ENCODE measurements at regions of chr12 and their contacts with region 1.

Region 1: DNA sequence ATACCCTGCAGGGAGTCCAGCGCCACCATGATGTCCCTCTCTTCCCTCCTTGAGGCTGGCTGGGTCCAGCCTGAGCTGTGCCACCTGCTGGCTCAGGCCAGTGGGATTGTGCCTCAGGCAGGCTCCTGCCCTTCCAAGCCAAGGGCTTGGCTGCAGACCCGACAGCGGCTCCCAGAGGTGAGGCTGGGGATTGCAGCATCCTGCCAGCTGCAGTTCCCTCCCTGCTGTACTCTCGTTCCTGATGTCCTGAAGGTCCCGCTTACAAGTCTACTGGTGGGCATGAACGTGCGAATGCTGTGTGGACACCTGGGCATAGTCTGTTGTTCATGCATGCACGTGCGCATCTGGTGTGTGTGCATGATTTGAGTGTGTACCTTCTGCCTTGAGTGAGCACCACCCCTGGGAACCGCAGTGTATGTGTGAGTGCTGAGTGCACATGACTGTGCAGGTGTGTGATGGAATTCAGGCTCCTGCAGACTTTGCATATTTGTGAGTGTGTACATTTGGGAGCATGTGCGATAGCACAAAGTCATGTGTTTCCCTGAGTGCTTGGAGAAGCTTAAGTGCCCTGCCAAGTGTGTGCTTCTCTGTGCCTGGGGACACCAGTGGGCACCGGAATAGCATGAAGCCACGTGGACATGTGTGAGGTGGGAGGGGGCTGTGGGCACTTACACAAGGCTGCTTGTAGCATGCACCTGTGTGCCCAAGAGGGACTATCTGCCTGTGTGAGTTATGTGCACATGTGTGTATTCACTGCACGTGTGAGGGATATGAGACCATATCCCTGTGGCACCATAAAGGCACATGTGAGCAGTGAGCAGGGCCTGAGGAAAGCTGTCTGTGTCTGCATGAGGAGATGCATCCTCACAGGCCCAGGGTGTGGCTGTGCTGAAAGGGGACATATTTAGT is 19.3 kb upstream of the KRT7 start:
- DNase-seq: peak; percentile 85 to 99
- H3K4me3 ChIP-seq: no peak overlapping the region
- H3K27ac ChIP-seq: no peak overlapping the region
- H3K4me1 ChIP-seq: peaks cover 0 to 4% (median under 1%) of the 10 kb centered on the region in 4 experiments; a peak in 4 of 7 replicates
- H3K27me3 ChIP-seq: no peaks in the 10 kb centered on the region
- CTCF ChIP-seq: peak; percentile 94 to 100 (median 99)
- EP300 ChIP-seq: no peak
- POLR2A ChIP-seq: no peak
- RAD21 ChIP-seq: peak; percentile 91 to 95

Region 2: DNA sequence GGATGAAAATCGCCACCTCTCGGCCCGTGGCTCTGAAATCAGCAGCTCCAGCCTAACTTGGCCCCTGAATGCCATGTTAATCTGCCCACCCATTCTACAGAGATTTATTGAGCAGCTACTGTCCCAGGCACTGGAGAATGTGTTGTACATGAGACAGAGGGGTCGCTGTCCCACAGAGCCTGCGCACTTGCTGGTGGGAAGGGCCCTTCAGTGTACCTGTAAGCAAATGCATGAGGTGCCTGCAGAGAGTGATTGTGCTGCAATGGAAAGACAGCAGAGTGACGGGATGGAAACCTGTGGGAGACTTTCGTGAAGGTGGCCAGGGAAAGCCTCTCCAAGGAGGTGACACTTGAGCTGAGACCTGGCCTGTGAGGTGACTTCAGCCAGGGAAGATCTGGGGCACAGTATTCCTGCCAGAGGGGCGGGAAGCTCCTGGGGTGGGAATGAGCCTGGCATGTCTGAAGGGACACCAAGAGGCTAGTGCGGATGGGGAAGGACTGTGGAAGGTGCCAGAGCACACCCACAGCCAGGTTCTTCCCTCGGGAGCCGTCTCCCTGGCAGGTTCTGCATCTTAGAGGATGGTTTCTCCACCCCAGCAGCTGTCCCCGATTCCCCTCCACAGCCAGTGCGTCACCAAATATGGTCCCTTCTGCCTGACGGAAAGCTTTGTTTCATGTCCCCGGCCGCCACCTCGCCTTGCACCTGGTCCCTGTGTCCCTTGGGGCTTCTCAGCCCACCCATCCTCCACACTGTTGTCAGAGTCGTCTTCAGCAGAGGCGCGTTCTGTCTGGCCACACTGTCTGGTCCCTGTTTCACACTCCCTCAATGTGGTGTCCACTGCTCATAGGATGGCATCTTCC is 125.6 kb before region 1 on chr12:
- CTCF ChIA-PET with region 1: no interaction called
- POLR2A ChIA-PET with region 1: no interaction called
- DNase-seq: no peak
- H3K4me3 ChIP-seq: no peak overlapping the region
- H3K27ac ChIP-seq: no peak overlapping the region
- H3K4me1 ChIP-seq: peaks cover 0 to 1% (median 0%) of the 10 kb centered on the region in 4 experiments; a peak in 2 of 7 replicates
- H3K27me3 ChIP-seq: no peaks in the 10 kb centered on the region
- CTCF ChIP-seq: no peak
- EP300 ChIP-seq: no peak
- POLR2A ChIP-seq: no peak
- RAD21 ChIP-seq: no peak

Region 3: DNA sequence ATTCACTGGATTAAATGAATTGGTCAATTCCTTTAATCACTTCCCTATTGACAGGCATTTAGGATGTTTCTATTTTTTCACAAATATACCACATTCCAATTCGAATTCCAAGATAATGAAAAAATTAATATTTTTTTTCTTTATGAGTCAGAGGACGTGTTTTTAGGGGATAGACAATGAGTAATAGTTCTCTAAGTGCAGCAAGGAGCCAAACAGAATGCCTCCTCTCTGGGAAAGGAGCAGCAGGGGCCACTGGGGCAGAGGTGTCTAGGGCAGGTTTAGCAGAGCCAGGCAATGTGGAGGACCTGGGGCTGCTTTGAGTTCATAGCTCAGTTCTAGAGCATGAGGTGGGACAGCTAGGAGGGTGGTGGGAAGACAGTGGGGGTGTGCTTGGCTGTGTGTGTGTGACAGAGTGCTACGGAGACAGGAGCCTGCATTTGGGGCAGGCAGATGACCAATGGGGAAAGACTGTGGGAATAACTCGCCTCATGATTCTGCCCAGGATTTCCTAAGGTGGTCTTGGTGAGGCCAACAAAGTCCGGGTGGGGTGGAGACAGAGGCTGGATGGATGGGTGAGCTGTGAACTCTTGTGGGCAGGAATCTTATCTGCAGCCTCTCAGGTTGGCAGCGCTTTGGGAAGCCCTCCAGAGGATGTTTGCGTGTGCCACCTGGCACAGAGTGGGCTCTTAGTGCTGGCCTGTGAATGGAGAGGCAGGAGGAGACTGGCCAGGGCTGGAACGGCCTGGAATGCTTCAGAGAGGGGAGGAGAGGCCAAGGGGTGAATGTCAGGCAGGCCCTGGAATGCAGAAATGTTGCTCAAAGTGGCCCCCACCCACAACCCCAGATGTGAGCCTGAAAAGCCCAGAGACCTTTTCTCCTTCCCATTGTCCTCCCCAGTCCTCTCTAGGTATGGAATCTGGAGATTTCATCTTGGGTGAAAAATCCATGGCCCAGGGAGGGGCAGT is 16.8 kb after region 1 on chr12:
- CTCF ChIA-PET with region 1: interaction called, 42 read pairs
- POLR2A ChIA-PET with region 1: interaction called, 3 read pairs
- DNase-seq: no peak
- H3K4me3 ChIP-seq: no peak overlapping the region
- H3K27ac ChIP-seq: no peak overlapping the region
- H3K4me1 ChIP-seq: peaks cover 0 to 25% (median 18%) of the 10 kb centered on the region in 4 experiments; a peak in 6 of 7 replicates
- H3K27me3 ChIP-seq: peaks cover 0 to 48% (median 25%) of the 10 kb centered on the region in 4 experiments; a peak in 6 of 7 replicates
- CTCF ChIP-seq: no peak
- EP300 ChIP-seq: peak in 1 of 2 experiments; percentile 91; a peak in 1 of 3 replicates
- POLR2A ChIP-seq: no peak
- RAD21 ChIP-seq: no peak

Region 4: GRCh38 chr12:52243856-52244614 is 30.3 kb after region 1 on chr12:
- CTCF ChIA-PET with region 1: interaction called, 146 read pairs
- POLR2A ChIA-PET with region 1: no interaction called
- DNase-seq: no peak
- H3K4me3 ChIP-seq: no peak overlapping the region
- H3K27ac ChIP-seq: no peak overlapping the region
- H3K4me1 ChIP-seq: peaks cover 0 to 9% (median 5%) of the 10 kb centered on the region in 4 experiments; a peak in 3 of 7 replicates
- H3K27me3 ChIP-seq: peaks cover 0 to 6% (median 3%) of the 10 kb centered on the region in 4 experiments; a peak in 4 of 7 replicates
- CTCF ChIP-seq: no peak
- EP300 ChIP-seq: no peak
- POLR2A ChIP-seq: no peak
- RAD21 ChIP-seq: no peak

Region 5: DNA sequence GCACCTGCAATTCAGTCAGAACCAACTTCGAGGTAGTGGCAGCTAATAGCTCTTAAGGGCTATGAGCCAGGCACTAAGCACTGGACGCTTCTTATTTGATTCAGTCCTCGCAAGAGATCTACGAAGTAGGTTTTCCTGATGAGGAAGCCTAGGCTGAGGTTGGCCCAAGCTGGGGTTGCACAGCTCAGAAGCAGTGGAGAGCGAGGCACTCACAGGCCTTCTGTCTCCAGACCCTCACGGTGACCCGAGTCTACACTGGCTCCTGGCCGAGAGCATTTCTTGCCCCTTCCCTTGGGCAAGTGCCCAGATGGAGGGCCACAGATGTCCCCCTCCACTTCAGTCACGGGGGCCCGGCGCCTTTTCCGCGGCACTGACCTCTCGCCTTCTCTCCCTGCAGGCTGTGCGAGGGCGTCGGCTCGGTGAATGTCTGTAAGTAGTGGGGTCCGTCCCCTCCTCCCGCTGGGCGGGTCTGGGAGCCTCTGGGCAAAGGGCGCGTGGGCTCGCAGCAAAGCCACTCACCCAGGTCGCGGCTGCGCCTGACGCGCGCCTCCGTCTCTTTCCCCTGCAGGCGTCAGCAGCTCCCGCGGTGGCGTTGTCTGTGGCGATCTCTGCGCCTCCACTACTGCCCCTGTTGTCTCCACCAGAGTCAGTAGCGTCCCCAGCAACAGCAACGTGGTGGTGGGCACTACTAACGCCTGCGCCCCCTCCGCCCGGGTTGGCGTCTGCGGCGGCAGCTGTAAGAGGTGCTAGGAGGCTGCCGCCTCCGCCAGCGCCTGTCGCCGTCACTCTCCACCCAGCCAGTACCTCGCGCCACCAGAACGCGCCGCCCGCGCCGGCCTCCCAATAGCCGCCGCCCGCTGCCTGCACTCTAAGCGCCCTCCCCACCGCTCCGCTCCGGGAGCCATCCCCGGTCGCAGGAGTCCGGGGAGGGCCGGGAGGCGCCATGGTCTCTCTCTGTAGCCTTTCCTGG is 94.4 kb after region 1 on chr12:
- CTCF ChIA-PET with region 1: interaction called, 63 read pairs
- POLR2A ChIA-PET with region 1: no interaction called
- DNase-seq: peak; percentile 23 to 83
- H3K4me3 ChIP-seq: peak overlapping the region; percentile 39 to 67 (median 61)
- H3K27ac ChIP-seq: no peak overlapping the region
- H3K4me1 ChIP-seq: peaks cover 0 to 4% (median 0%) of the 10 kb centered on the region in 4 experiments; a peak in 1 of 7 replicates
- H3K27me3 ChIP-seq: peaks cover 21 to 47% (median 36%) of the 10 kb centered on the region in 4 experiments
- CTCF ChIP-seq: peak in 2 of 3 experiments; percentile 14 to 24; a peak in 2 of 4 replicates
- EP300 ChIP-seq: no peak
- POLR2A ChIP-seq: no peak
- RAD21 ChIP-seq: peak in 1 of 2 experiments; percentile 15; a peak in 1 of 4 replicates

Region 6: GRCh38 chr12:52358575-52359350 is 145.0 kb after region 1 on chr12:
- CTCF ChIA-PET with region 1: interaction called, 11 read pairs
- POLR2A ChIA-PET with region 1: no interaction called
- DNase-seq: no peak
- H3K4me3 ChIP-seq: no peak overlapping the region
- H3K27ac ChIP-seq: no peak overlapping the region
- H3K4me1 ChIP-seq: no peaks in the 10 kb centered on the region
- H3K27me3 ChIP-seq: no peaks in the 10 kb centered on the region
- CTCF ChIP-seq: no peak
- EP300 ChIP-seq: no peak
- POLR2A ChIP-seq: no peak
- RAD21 ChIP-seq: no peak